Pancreas (tissue), 10 donors: ENCODE measurements at regions of chr2 and their contacts with region 1.

Region 1: DNA sequence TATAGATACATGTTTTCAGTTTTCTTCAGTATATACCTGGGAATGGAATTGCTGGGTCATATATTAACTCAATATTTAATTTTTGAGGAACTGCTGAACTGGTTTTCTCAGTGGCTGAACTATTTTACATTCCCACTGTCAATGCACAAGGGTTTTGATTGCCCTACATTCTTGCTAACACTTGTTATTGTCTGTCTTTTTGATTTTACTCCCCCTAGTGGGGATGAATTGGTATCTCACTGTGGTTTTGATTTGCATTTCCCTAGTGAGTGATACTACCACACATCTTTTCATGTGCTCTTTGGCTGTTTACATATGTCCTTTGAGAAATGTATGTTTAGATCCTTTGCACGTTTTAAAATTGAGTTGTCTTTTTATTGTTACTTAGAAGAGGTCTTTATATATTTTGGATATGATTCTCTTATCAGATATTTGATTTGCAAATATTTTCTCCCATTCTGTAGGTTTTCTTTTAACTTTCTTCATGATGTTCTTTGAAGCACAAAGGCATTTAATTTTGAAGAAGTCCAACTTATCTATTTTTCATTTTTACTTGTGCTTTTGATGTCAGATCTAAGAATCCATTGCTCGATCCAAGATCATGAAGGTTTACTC is 36.2 kb downstream of the ASB1 start:
- DNase-seq: no peak
- ATAC-seq: peak in 3 of 4 donors; percentile 62 to 72 (median 70)
- H3K4me3 ChIP-seq: no peak overlapping the region
- H3K27ac ChIP-seq: no peak overlapping the region
- H3K4me1 ChIP-seq: no peaks in the 10 kb centered on the region
- H3K27me3 ChIP-seq: no peaks in the 10 kb centered on the region
- CTCF ChIP-seq: peak; percentile 28 to 57 (median 54)

Region 2: DNA sequence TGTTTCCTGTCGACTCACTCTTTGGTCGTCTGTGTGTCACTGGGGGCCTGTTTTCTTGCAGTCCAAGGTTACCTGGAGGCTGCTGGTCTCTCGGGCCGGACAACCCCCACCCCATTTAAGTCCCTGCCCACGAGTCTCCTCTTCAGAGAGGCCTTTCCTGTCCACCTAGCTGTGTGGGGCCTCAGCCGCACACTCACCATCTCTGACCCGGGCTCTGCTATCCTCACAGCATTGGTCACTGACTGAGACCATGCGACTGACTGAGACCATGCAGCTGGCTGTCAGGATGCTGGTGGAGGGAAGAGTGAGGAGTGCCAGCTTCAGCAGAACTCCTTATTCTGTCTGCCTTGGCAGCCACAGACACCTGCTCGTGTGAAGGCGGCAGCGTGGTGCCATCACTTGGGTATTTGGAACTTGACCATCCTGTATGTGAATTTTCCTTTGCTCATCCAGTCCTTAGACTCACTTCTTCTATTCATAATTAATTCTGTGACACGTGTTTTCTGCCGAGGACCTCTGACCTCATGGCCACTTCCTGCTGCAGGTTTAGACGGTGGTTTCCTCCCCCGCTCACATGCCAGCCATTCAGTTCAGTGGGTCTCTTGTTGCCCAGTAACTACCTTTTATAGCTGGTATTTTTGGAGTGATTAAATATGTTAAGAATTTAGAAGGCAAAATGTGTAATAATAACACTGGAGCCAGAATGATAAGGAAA is 83.6 kb before region 1 on chr2:
- intact Hi-C with region 1: loop called in 1 of 3 experiments (anchors 5 kb)
- DNase-seq: peak in 1 of 6 donors; percentile 23
- ATAC-seq: peak; percentile 51 to 83 (median 68)
- H3K4me3 ChIP-seq: no peak overlapping the region
- H3K27ac ChIP-seq: peak overlapping the region in 2 of 4 donors; percentile 6 to 61
- H3K4me1 ChIP-seq: peaks cover 0 to 23% (median 8%) of the 10 kb centered on the region in 3 donors
- H3K27me3 ChIP-seq: no peaks in the 10 kb centered on the region
- CTCF ChIP-seq: no peak

Region 3: DNA sequence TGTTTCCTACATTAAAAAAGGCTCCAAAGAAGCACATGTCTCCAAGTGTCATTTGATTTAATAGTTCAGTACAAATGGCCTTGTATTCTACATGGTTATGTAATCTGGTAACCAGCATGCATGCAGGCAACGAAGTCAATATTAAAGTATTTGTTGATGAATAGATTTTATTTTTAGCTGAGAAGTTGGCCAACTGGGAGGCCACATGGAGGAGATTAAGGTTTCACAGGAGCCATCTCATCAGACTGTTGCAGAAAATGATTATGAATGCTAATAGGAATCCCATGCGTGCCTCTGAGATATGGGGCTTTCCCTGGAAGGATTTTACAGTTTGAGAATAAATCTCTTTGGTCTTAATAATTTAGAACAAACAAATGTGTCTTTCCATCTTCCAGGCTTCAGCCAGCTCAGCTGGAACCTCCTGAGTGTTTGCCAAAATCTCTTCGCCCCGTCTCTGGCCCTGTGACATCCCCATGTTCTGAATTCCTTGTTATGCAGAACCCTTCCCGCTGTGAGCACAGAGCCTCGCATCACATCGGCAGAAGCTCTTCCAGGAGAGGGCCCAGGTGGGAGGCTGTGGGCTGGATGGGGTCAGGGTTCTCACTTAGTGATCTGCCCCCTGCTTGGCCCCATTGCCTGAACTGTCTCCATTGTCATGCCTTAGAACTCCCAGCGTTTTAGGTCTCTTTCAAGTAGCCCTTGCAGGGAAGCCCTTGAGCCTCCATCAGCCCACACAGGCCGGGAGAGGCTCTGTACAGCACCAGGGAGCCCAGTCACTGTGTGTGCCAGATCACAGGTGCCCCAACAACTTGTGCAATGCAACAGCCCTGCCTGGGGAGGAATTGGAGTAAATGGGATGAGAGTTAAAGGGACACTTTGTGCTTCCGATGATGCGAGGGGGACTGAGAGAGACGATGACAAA is 194.5 kb after region 1 on chr2:
- intact Hi-C with region 1: no loop called
- DNase-seq: no peak
- ATAC-seq: no peak
- H3K4me3 ChIP-seq: no peak overlapping the region
- H3K27ac ChIP-seq: no peak overlapping the region
- H3K4me1 ChIP-seq: no peaks in the 10 kb centered on the region
- H3K27me3 ChIP-seq: no peaks in the 10 kb centered on the region
- CTCF ChIP-seq: no peak